ENCODE measurements at regions of chr1 and their contacts with region 1.

Region 1: DNA sequence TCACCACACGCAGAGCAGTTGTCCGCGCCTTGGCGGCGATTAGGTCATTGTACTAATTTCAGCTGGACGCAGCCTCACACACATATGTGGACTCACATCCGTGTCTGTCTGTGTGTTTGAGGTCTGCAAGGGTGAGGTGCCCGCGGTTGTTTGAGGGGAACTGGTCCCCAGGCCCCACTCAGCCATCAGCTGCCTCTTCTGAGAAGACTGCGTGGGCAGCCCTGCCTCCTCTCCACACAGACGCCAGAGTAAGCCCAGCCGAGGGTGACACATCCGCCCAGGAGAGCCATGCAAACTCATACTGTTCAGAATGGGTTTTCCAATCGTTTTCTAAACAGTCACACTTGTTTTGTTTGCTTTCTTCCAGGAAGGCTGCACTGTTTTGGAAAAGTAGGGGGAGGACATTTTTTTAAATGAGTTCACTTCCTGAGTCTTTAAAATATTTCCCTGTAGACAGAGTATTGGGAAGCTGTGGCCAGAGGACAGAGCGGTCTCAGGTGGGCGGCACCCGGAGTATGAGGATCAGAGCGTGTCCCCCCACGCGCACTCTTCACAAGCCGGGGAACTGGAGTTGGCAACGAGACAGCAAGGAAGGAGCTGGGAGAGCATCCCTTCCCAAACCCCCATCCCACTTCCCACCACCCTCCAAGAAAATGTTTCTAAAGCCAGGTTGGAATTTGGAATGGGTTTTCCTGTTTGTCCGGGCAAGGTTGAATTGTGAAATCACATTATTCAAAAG is 53.3 kb downstream of the TOMM20 start:
- DNase-seq: peak in 5 of 7 donors; percentile 47 to 79 (median 57)
- H3K4me3 ChIP-seq: no peak overlapping the region
- H3K27ac ChIP-seq: peak overlapping the region in 4 of 5 donors; percentile 60 to 94 (median 72)
- H3K4me1 ChIP-seq: peaks cover 38 to 52% of the 10 kb centered on the region in 2 donors
- H3K27me3 ChIP-seq: no peaks in the 10 kb centered on the region
- CTCF ChIP-seq: no peak
- POLR2A ChIP-seq: no peak

Region 2: GRCh38 chr1:234610348-234611152 is 464.8 kb before region 1 on chr1:
- intact Hi-C with region 1: loop called in 1 of 2 experiments (anchors 5 kb)
- DNase-seq: peak; percentile 96 to 98 (median 96)
- H3K4me3 ChIP-seq: peak overlapping the region; percentile 31 to 88 (median 55)
- H3K27ac ChIP-seq: peak overlapping the region; percentile 97 to 100 (median 100)
- H3K4me1 ChIP-seq: peaks cover 45% of the 10 kb centered on the region in 2 donors
- H3K27me3 ChIP-seq: no peaks in the 10 kb centered on the region
- CTCF ChIP-seq: peak in 3 of 6 experiments; percentile 21 to 41 (median 40)
- POLR2A ChIP-seq: peak; percentile 99

Region 3: GRCh38 chr1:234730770-234731568 is 344.4 kb before region 1 on chr1:
- intact Hi-C with region 1: loop called in 1 of 2 experiments (anchors 10 kb)
- DNase-seq: no peak
- H3K4me3 ChIP-seq: no peak overlapping the region
- H3K27ac ChIP-seq: no peak overlapping the region
- H3K4me1 ChIP-seq: peaks cover 7 to 23% of the 10 kb centered on the region in 2 donors
- H3K27me3 ChIP-seq: no peaks in the 10 kb centered on the region
- CTCF ChIP-seq: no peak
- POLR2A ChIP-seq: no peak

Region 4: GRCh38 chr1:234987415-234988154 is 87.8 kb before region 1 on chr1:
- intact Hi-C with region 1: loop called in 1 of 2 experiments (anchors 5 kb)
- DNase-seq: peak in 6 of 7 donors; percentile 40 to 89 (median 70)
- H3K4me3 ChIP-seq: no peak overlapping the region
- H3K27ac ChIP-seq: peak overlapping the region; percentile 63 to 93 (median 76)
- H3K4me1 ChIP-seq: peaks cover 34 to 44% of the 10 kb centered on the region in 2 donors
- H3K27me3 ChIP-seq: no peaks in the 10 kb centered on the region
- CTCF ChIP-seq: peak in 1 of 6 experiments; percentile 21
- POLR2A ChIP-seq: no peak